Endothelial cell of umbilical vein (primary cell): ENCODE measurements at regions of chr17 and their contacts with region 1.

Region 1: DNA sequence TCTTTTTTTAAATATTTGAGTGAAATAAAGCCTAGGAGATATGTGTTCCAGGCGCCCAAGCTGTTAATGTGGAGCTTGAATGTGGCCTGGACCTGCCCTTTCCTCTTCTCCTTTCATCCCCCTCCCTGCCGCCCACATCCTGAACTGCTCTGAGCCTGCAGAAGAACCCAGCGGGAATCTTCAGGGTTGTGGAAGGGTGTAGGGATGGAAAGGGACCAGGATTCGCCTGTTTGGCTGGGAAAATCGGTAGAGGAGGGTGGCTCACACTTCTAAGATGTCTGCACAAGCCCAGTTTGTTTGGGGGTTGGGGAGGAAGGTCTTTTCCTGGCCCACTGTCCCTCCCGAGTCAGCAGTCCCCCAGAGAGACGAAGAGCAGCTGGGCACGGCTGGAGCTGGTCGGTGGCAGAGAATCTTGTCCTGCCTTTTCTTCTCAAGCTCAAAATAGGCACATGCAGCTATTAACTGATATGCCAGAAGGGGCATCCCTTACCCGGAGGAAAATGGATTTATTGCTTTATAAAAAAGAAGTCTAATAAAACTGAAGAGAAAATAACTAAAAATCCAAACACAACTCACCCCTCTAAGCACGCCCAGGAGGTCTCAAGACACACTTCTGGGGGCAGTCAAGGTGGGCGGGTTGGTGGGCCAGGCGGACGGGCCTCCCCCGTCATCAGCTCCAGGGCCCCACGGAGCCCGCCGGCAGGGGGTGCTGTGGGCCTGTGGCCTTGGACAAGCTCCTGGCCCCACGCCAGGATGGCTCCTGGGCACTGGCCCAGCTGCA is 11.5 kb upstream of the PITPNA start:
- DNase-seq: peak; percentile 76
- H3K4me3 ChIP-seq: no peak overlapping the region
- H3K27ac ChIP-seq: no peak overlapping the region
- H3K4me1 ChIP-seq: peaks cover 21% of the 10 kb centered on the region
- H3K27me3 ChIP-seq: no peaks in the 10 kb centered on the region
- CTCF ChIP-seq: peak; percentile 96 to 99
- POLR2A ChIP-seq: no peak

Region 2: DNA sequence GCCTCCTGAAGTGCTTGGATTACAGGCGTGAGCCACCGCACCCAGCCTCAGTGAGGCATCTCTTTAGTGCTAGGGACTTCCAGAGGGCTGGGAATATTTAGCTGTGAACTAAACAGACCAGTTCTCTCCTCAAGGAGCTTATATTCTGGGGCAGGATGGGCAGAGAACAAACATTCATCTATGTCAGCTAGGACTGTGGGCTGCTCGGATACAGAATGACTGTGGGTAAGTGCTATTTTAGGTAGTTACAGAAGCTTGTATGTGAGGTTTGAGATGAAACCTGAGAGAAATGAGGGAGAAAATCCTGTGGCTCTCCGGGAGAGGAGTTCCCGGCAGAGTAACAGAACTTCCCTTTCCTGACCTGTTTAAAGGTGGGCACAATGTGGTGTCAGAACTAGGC is 51.5 kb before region 1 on chr17:
- CTCF ChIA-PET with region 1: no interaction called
- POLR2A ChIA-PET with region 1: no interaction called
- dilution Hi-C with region 1: no loop called
- intact Hi-C with region 1: no loop called
- DNase-seq: no peak
- H3K4me3 ChIP-seq: no peak overlapping the region
- H3K27ac ChIP-seq: no peak overlapping the region
- H3K4me1 ChIP-seq: peaks cover 1% of the 10 kb centered on the region
- H3K27me3 ChIP-seq: no peaks in the 10 kb centered on the region
- CTCF ChIP-seq: no peak
- POLR2A ChIP-seq: no peak

Region 3: DNA sequence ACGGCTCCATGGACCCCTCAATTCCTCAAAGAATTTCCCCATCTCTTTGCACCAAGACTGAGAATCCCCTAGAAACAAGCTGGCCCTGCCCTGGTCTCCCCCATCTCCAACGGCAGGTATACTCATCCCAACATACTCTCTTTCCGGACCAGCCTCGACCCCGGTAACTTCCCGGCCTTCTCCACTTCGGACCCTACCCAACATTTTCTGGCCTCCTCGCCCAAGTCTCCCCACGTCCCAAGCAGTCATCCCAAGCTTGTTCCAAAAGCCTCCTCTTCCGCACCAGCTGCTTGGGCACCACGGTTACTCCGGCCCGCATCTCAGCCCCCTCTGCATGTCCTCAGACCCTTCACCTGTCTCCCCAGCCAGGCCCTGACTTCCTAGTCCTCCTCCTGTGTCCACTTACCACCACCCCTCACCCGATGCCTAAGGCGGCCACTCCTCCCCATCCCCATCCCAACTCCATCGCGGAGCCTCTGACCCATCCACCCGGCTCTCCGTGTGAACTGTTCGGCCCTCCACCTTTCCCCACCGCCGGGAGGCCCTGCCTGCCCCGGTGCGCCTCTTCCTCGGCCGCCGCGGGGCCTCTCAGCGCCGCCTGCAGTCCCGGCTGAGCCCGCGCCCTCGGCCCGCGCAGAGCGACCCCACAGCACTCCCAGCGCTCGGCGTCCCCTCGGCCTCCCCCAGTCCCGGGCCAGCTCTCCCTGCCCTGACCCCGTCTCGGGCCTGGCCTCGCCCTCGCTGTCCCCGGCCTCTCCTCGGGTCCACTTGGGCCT is 12.5 kb before region 1 on chr17:
- CTCF ChIA-PET with region 1: interaction called, 20 read pairs
- POLR2A ChIA-PET with region 1: no interaction called
- dilution Hi-C with region 1: no loop called
- intact Hi-C with region 1: no loop called
- DNase-seq: peak; percentile 24
- H3K4me3 ChIP-seq: peak overlapping the region; percentile 45 to 83 (median 69)
- H3K27ac ChIP-seq: peak overlapping the region; percentile 46
- H3K4me1 ChIP-seq: peaks cover 38% of the 10 kb centered on the region
- H3K27me3 ChIP-seq: no peaks in the 10 kb centered on the region
- CTCF ChIP-seq: peak; percentile 15 to 40
- POLR2A ChIP-seq: no peak

Region 4: GRCh38 chr17:1611715-1612114 is 37.6 kb after region 1 on chr17:
- CTCF ChIA-PET with region 1: interaction called, 100 read pairs
- POLR2A ChIA-PET with region 1: no interaction called
- dilution Hi-C with region 1: no loop called
- intact Hi-C with region 1: no loop called
- DNase-seq: no peak
- H3K4me3 ChIP-seq: no peak overlapping the region
- H3K27ac ChIP-seq: no peak overlapping the region
- H3K4me1 ChIP-seq: peaks cover 11% of the 10 kb centered on the region
- H3K27me3 ChIP-seq: no peaks in the 10 kb centered on the region
- CTCF ChIP-seq: no peak
- POLR2A ChIP-seq: no peak

Region 5: DNA sequence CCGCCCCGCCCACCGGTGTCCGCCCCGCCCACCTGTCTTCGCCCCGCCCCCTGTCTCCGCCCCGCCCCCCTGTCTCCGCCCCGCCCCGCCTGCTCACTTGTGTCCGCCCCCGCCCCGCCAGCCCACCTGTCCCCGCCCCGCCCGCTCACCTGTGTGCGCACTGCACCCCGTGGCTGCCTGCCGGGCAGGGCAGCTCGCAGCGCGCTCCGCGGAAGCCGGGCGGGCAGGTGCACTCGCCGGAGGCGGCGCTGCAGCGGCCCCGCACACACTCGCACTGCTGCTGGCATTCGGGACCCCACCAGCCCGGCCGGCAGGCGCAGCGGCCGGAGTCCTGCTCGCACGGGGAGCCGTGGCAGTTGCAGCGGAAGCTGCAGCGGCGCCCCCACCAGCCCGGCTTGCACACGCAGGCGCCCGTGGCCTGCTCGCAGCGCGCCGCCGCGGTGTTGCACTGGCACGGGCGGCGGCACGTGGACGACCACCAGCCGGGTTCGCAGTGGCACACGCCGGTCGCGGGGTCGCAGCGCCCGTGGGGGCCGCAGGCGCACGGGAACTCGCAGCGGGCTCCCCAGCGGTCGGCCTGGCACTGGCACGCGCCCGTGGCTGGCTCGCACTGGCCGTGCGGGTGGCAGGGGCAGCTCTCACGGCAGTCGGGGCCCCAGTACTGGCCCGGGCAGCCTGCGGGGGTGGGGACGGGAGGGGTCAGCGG is 69.3 kb after region 1 on chr17:
- CTCF ChIA-PET with region 1: interaction called, 218 read pairs
- POLR2A ChIA-PET with region 1: interaction called, 9 read pairs
- dilution Hi-C with region 1: no loop called
- intact Hi-C with region 1: loop called (anchors 1 kb)
- DNase-seq: no peak
- H3K4me3 ChIP-seq: peak overlapping the region in 1 of 3 experiments; percentile 78
- H3K27ac ChIP-seq: peak overlapping the region; percentile 72
- H3K4me1 ChIP-seq: peaks cover 35% of the 10 kb centered on the region
- H3K27me3 ChIP-seq: no peaks in the 10 kb centered on the region
- CTCF ChIP-seq: peak; percentile 16 to 29
- POLR2A ChIP-seq: no peak

Region 6: GRCh38 chr17:1673041-1673785 is 99.1 kb after region 1 on chr17:
- CTCF ChIA-PET with region 1: interaction called, 14 read pairs
- POLR2A ChIA-PET with region 1: no interaction called
- dilution Hi-C with region 1: no loop called
- intact Hi-C with region 1: no loop called
- DNase-seq: no peak
- H3K4me3 ChIP-seq: no peak overlapping the region
- H3K27ac ChIP-seq: no peak overlapping the region
- H3K4me1 ChIP-seq: no peaks in the 10 kb centered on the region
- H3K27me3 ChIP-seq: no peaks in the 10 kb centered on the region
- CTCF ChIP-seq: no peak
- POLR2A ChIP-seq: no peak